Left ventricle myocardium inferior (tissue), 1 donor: ENCODE measurements at regions of chr15 and their contacts with region 1.

Region 1: DNA sequence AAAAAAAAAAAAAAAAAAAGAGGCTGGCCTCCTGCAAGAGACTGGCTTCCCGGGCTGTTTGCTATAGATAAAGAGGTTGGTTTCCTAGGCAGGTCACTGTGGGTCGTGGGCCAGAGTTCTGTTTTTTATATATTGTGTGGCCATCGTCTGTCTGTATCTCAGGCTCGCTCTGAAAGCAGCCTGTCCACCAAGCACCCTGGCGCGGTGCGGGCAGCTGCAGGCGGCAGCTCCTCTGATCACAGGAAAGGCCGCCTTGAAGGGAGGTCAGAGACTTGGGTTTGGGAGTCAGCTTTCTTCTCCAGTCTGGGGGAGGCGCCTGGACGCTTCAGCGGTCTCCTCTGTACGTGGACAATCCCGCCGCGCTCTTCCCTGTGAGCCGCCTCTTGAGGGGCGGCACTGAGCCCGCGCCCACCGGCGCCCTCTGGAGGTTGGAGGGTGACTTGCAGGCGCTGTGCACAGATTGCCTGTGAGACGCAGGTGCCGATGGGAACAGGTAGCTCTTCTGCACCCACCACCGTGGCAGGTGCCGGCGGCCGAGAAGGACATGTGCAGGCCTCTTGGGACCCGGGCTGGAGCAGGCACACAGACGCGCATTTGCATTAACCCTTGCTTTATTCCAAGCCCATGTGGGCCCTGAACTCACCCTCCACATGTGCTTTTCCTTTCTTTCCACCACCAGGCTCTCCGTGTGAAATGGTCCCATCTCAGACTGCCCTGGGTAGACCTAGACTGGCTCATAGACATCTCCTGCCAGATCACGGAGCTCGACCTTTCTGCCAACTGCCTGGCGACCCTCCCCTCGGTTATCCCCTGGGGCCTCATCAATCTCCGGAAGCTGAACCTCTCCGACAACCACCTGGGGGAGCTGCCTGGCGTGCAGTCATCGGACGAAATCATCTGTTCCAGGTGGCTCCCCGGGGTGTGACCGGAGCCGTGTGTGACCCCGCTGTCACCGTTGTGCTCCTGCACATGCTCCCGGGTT is 89.3 kb downstream of the LRRK1 start:
- DNase-seq: peak; percentile 78
- H3K4me3 ChIP-seq: peak overlapping the region; percentile 69
- H3K27ac ChIP-seq: no peak overlapping the region
- H3K4me1 ChIP-seq: peaks cover 22% of the 10 kb centered on the region
- H3K27me3 ChIP-seq: no peaks in the 10 kb centered on the region
- CTCF ChIP-seq: peak; percentile 98

Region 2: DNA sequence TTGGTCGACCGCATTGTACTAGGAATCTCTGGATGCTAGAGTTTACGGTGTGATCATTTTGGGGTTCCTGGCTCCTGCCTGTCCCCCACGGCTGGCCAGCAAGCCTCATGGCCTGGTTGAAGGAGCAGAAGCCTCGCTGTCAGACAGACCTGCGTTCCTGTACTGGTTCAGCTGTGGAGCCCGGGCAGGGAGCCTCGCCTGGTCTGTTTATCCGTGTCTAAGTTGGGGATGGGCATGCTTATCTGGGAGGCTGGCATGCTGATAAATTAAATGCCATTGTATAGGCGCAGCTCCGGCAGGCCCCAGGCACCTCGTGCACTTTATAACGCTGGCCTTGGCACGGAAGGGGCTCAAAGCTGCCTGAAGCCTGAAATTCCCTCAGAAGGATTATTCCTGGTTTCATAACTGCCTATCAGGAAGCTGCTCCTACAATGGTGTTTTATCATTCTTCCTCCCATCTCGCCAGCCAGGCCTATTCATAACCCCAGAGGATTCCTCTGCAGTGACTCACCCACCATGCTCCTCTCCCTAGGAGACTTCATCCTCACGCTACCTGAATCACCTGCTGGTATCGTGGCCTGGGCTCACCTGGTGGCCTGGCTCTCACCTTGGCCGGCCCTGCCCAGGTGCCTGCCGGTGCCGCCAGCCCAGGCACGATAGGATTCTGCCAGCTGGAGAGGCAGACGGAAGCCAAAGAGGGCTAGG is 295.1 kb before region 1 on chr15:
- intact Hi-C with region 1: no loop called
- DNase-seq: no peak
- H3K4me3 ChIP-seq: no peak overlapping the region
- H3K27ac ChIP-seq: no peak overlapping the region
- H3K4me1 ChIP-seq: peaks cover 37% of the 10 kb centered on the region
- H3K27me3 ChIP-seq: no peaks in the 10 kb centered on the region
- CTCF ChIP-seq: no peak

Region 3: GRCh38 chr15:100918034-100918689 is 90.3 kb before region 1 on chr15:
- intact Hi-C with region 1: loop called (anchors 5 kb)
- DNase-seq: peak; percentile 80
- H3K4me3 ChIP-seq: peak overlapping the region; percentile 78
- H3K27ac ChIP-seq: peak overlapping the region; percentile 49
- H3K4me1 ChIP-seq: peaks cover 28% of the 10 kb centered on the region
- H3K27me3 ChIP-seq: peaks cover 84% of the 10 kb centered on the region
- CTCF ChIP-seq: peak; percentile 96